ENCODE measurements at regions of chrX and their contacts with region 1.

Region 1: DNA sequence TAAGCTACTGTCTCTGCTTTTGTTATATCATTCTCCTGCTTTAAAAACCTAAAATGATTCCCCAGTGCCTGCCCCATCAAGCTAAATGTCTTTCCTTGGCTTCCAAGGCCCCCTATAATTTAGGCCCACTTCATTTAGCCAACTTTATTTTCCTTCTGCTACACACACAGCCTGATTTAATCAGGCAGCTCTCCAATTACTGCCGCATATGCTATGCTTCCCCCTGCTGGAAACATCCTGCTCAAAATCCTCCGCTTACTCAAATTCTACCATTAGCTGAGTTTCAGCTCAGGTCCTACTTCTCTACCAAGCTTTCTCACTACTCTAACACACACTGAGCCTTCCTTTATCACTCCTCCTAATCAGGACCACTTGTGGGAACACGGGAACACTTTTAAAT is 17.0 kb downstream of the LAMP2 start:
- DNase-seq: no peak
- H3K4me3 ChIP-seq: no peak overlapping the region
- H3K27ac ChIP-seq: no peak overlapping the region
- H3K27me3 ChIP-seq: no peaks in the 10 kb centered on the region
- CTCF ChIP-seq: peak; percentile 59

Region 2: GRCh38 chrX:120439921-120440320 is 12.2 kb before region 1 on chrX:
- CTCF ChIA-PET with region 1: interaction called, 12 read pairs
- POLR2A ChIA-PET with region 1: no interaction called
- DNase-seq: no peak
- H3K4me3 ChIP-seq: no peak overlapping the region
- H3K27ac ChIP-seq: no peak overlapping the region
- H3K27me3 ChIP-seq: no peaks in the 10 kb centered on the region
- CTCF ChIP-seq: no peak

Region 3: DNA sequence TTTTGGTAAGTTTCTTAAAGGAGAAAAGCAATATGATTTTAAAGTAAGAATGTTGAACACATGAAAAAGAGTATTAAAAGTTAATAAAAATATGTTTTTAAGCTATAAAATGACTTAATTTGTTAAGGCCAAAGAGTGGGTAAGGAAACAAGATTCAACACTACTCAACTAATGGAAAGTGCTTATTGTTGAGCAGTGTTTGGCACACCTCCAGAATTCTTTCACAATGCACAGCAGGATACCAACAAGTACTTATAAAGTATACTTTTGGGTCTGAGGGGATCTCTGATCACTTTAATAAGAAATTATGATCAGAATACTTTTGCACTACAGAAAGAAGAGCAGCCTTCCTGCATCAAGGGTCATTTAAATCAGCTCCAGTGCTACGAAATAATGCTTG is 11.1 kb after region 1 on chrX:
- CTCF ChIA-PET with region 1: interaction called, 11 read pairs
- POLR2A ChIA-PET with region 1: interaction called, 4 read pairs
- DNase-seq: no peak
- H3K4me3 ChIP-seq: no peak overlapping the region
- H3K27ac ChIP-seq: no peak overlapping the region
- H3K27me3 ChIP-seq: no peaks in the 10 kb centered on the region
- CTCF ChIP-seq: no peak

Region 4: GRCh38 chrX:120617996-120618630 is 166.0 kb after region 1 on chrX:
- CTCF ChIA-PET with region 1: no interaction called
- POLR2A ChIA-PET with region 1: no interaction called
- DNase-seq: no peak
- H3K4me3 ChIP-seq: no peak overlapping the region
- H3K27ac ChIP-seq: no peak overlapping the region
- H3K27me3 ChIP-seq: no peaks in the 10 kb centered on the region
- CTCF ChIP-seq: no peak

Measured in AG04450 (cell line).